Breast epithelium (tissue), 4 donors: ENCODE measurements at regions of chr15 and their contacts with region 1.

Region 1: GRCh38 chr15:73601451-73602445 is 31.4 kb downstream of the NPTN start:
- DNase-seq: peak; percentile 56 to 61
- H3K4me3 ChIP-seq: no peak overlapping the region
- H3K27ac ChIP-seq: peak overlapping the region; percentile 71 to 74
- H3K4me1 ChIP-seq: peaks cover 2 to 25% of the 10 kb centered on the region in 2 donors
- H3K27me3 ChIP-seq: no peaks in the 10 kb centered on the region
- CTCF ChIP-seq: no peak
- POLR2A ChIP-seq: no peak

Region 2: DNA sequence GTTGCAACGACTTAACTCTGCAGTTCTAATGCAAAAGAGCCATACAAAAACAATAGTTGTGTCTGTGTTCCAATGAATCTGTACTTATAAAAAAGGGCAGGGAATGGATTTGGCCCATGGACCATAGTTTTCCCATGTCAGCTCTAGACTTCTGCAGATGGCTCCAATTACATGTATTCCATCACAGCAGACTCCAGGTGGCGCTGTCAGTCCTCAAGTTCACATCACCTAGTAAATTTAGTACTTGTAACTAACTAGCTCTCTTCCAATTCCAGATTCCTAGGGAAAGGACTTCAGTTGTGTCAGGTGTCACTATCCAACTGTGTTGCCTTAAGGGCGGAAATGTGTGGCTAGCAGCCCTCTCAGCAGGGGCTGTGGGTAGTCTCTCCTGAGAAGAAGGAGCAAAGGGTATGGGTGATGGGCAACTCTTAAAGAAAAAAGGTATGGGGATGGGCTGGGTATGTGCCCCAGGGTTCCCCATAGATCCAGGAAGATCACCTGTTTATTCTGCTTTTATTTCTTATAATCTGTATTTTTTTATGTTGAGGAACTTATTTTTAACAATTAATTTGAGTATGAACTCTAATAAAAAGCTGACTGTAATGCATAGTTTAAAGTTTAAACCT is 879.6 kb before region 1 on chr15:
- intact Hi-C with region 1: loop called (anchors 10 kb)
- DNase-seq: no peak
- H3K4me3 ChIP-seq: no peak overlapping the region
- H3K27ac ChIP-seq: no peak overlapping the region
- H3K4me1 ChIP-seq: no peaks in the 10 kb centered on the region
- H3K27me3 ChIP-seq: no peaks in the 10 kb centered on the region
- CTCF ChIP-seq: peak in 2 of 3 donors; percentile 57 to 58
- POLR2A ChIP-seq: no peak

Region 3: DNA sequence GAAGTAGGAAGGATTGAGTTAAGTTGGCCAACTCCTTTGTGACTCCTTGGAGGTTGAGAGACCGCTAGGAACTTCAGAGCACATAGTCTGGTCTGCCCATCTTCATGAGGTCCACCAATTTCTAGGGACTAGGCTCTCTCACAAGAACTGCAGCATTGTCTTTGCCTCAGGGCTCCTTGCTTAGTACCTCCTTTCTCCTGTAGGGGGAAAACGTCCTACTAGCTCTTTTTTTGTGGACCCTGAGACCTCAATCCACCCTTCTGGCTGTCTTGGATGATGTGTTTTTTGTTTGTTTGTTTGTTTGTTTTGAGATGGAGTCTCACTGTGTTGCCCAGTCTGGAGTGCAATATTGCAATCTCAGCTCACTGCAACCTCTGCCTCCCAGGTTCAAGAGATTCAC is 137.1 kb before region 1 on chr15:
- intact Hi-C with region 1: loop called (anchors 5 kb)
- DNase-seq: no peak
- H3K4me3 ChIP-seq: no peak overlapping the region
- H3K27ac ChIP-seq: no peak overlapping the region
- H3K4me1 ChIP-seq: no peaks in the 10 kb centered on the region
- H3K27me3 ChIP-seq: no peaks in the 10 kb centered on the region
- CTCF ChIP-seq: no peak
- POLR2A ChIP-seq: no peak